Endothelial cell of umbilical vein (primary cell): ENCODE measurements at regions of chr15 and their contacts with region 1.

Region 1: GRCh38 chr15:43105778-43106485 is at the start of gene UBR1:
- DNase-seq: peak; percentile 89
- H3K4me3 ChIP-seq: peak within 1 kb of the TSS; percentile 65 to 96 (median 91)
- H3K27ac ChIP-seq: peak within 1 kb of the TSS; percentile 84
- H3K4me1 ChIP-seq: peaks cover 21% of the 10 kb centered on the region
- H3K27me3 ChIP-seq: no peaks in the 10 kb centered on the region
- CTCF ChIP-seq: no peak
- POLR2A ChIP-seq: peak; percentile 67
- total RNA-seq, gene UBR1: 26.9 and 28.8 TPM in 2 replicates

Region 2: GRCh38 chr15:42691308-42691707 is 414.6 kb before region 1 on chr15:
- CTCF ChIA-PET with region 1: no interaction called
- POLR2A ChIA-PET with region 1: no interaction called
- dilution Hi-C with region 1: no loop called
- intact Hi-C with region 1: no loop called
- DNase-seq: no peak
- H3K4me3 ChIP-seq: no peak overlapping the region
- H3K27ac ChIP-seq: no peak overlapping the region
- H3K4me1 ChIP-seq: no peaks in the 10 kb centered on the region
- H3K27me3 ChIP-seq: no peaks in the 10 kb centered on the region
- CTCF ChIP-seq: no peak
- POLR2A ChIP-seq: no peak

Region 3: GRCh38 chr15:43118829-43119228 is 12.9 kb after region 1 on chr15:
- CTCF ChIA-PET with region 1: no interaction called
- POLR2A ChIA-PET with region 1: no interaction called
- dilution Hi-C with region 1: no loop called
- intact Hi-C with region 1: no loop called
- DNase-seq: no peak
- H3K4me3 ChIP-seq: no peak overlapping the region
- H3K27ac ChIP-seq: no peak overlapping the region
- H3K4me1 ChIP-seq: peaks cover 6% of the 10 kb centered on the region
- H3K27me3 ChIP-seq: peaks cover 8 to 13% of the 10 kb centered on the region in 2 experiments
- CTCF ChIP-seq: no peak
- POLR2A ChIP-seq: no peak

Region 4: GRCh38 chr15:43150191-43150929 is 44.4 kb after region 1 on chr15:
- CTCF ChIA-PET with region 1: interaction called, 4 read pairs
- POLR2A ChIA-PET with region 1: no interaction called
- dilution Hi-C with region 1: no loop called
- intact Hi-C with region 1: loop called (anchors 5 kb)
- DNase-seq: peak; percentile 78
- H3K4me3 ChIP-seq: no peak overlapping the region
- H3K27ac ChIP-seq: peak overlapping the region; percentile 79
- H3K4me1 ChIP-seq: peaks cover 10% of the 10 kb centered on the region
- H3K27me3 ChIP-seq: no peaks in the 10 kb centered on the region
- CTCF ChIP-seq: no peak
- POLR2A ChIP-seq: no peak

Region 5: DNA sequence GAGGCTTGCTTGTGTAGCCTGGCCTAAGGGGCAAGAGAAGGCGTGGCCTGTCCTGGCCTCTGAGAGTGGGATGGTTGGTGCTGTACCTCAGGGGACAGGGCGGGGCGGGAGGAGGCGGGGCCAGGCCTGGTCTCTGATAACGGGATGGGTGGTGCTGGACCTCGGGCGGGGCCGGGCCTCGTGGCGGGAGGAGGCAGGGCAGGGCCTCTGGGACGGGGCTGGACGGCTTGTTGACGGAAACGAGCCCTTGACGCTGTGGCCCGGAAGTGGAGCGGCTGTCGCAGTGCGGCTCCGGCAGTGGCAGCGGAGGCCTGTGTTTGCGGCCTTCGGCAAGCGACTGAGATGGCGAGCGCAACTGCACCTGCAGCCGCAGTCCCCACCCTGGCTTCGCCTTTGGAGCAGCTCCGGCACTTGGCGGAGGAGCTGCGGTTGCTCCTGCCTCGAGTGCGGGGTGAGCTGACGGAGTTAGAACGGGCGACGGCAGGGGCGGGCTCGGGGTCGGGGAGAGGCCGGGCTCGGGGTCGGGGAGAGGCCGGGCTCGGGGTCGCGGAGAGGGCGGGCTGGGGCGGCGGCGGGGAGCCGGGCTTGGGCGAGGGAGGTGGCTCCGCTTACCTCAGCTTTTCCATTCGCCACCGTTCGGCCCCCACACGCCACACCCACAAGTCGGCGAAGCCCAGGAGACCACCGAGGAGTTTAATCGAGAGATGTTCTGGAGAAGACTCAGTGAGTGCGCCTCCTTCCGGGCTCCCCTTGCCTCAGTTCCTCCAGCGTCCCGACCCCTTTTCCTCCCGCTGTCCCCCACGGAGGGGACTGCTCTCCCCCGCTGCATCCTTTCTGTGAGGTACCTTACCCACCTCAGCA is 79.5 kb after region 1 on chr15 and contains the start of gene CCNDBP1:
- CTCF ChIA-PET with region 1: no interaction called
- POLR2A ChIA-PET with region 1: no interaction called
- dilution Hi-C with region 1: no loop called
- intact Hi-C with region 1: loop called (anchors 5 kb)
- DNase-seq: peak; percentile 70
- H3K4me3 ChIP-seq: peak within 1 kb of the TSS; percentile 32 to 76 (median 57)
- H3K27ac ChIP-seq: peak within 1 kb of the TSS; percentile 9
- H3K4me1 ChIP-seq: peaks cover 19% of the 10 kb centered on the region
- H3K27me3 ChIP-seq: no peaks in the 10 kb centered on the region
- CTCF ChIP-seq: peak in 1 of 2 donors; percentile 35
- POLR2A ChIP-seq: peak; percentile 73
- total RNA-seq, gene CCNDBP1: 39.9 and 41.4 TPM in 2 replicates